KBM-7 (cell line): ENCODE measurements at regions of chr15 and their contacts with region 1.

Region 1: DNA sequence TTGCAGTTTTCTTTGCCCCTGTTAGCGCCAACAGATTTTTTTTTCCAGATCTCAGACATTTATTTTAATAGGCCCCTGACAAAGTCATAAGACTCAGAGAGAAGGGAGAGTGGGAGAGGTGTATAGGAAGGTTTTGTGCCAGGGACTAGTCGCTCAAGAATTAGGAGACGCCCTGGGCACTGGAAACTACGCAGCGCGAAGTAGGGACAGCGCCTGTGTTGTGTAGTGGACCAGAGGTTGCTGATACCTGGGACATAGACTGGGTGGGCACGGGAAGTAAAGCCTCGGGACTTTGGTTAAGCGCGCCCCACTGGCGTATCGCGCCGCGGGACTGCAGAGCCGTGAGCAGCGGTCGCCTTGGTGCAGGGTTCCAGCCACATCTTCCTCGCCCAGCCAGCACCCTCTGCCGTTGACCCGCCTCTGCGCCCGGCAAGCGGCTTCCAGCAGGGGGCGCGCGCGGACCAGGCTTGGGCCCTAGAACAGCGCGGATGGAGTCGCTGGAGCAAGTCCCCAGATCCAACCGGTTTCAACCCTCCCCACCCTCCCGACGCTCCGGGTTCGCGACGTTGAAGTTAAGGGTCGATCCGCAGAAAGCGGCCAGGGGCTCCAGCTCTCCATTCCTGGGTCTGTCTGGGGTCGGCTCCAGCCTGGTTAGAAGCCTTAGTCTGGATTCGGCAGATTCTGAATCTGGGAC is 3.0 kb upstream of the ISLR2 start:
- DNase-seq: peak; percentile 98

Region 2: DNA sequence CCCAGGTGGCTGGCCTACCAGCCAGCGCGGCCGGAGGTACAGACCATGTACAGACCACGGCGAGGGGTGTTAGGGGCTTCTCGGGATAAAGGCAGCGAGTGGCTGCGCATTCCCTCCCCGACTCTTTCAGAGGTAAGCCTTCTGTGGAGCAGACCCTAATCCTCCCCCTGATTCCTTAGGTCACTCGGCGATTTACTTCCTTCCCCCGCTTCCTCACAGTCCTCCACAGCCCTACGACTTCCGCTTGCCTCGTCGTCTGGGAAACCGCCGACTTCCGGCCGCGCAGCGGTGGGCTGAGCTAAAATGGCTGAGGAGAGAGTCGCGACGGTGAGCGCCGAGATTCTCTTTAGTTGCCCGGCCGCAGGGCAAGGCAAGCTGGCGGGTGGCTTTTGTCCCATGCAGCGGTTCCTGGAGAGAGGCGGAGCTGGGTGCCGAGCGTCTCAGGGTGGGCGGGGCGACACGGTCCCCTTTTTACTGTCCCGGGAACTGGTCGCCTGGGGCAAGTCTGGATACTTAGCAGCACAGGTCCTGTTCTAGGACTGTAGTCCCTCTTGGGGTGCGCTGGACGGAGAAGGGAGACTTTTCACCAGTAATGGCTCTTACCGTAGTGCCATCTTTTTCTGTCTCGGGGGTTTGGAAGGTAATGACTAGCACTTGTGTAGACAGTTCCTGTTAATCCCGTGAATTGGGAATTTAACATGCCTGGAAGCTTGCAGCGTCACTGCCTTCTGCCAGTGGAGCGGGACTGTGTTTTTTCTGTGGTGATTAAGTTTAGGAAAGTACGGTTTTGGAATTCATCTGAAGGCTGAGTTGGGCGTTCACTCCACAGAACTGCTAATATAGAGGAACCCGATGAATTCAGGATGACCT is 1441.2 kb before region 1 on chr15 and contains the starts of genes BBS4 and HIGD2B:
- in situ Hi-C with region 1: loop called (anchors 25 kb)
- DNase-seq: peak; percentile 99

Region 3: GRCh38 chr15:73273181-73274002 is 854.0 kb before region 1 on chr15:
- in situ Hi-C with region 1: loop called (anchors 25 kb)
- DNase-seq: peak; percentile 82

Region 4: GRCh38 chr15:74322181-74323076 is 195.0 kb after region 1 on chr15:
- in situ Hi-C with region 1: loop called (anchors 25 kb)
- DNase-seq: peak; percentile 84